ENCODE measurements at regions of chr17 and their contacts with region 1.

Region 1: GRCh38 chr17:75679706-75680442 is 12.7 kb downstream of the SAP30BP start:
- DNase-seq: no peak
- ATAC-seq: peak; percentile 93
- H3K4me3 ChIP-seq: no peak overlapping the region
- H3K27ac ChIP-seq: peak overlapping the region; percentile 59
- H3K4me1 ChIP-seq: peaks cover 27% of the 10 kb centered on the region
- H3K27me3 ChIP-seq: no peaks in the 10 kb centered on the region
- CTCF ChIP-seq: peak; percentile 42

Region 2: GRCh38 chr17:75720725-75721462 is 41.0 kb after region 1 on chr17 and contains the start of gene ITGB4:
- intact Hi-C with region 1: loop called (anchors 10 kb)
- DNase-seq: peak; percentile 91
- ATAC-seq: peak; percentile 90
- H3K4me3 ChIP-seq: peak within 1 kb of the TSS; percentile 57
- H3K27ac ChIP-seq: peak within 1 kb of the TSS; percentile 85
- H3K4me1 ChIP-seq: peaks cover 2% of the 10 kb centered on the region
- H3K27me3 ChIP-seq: peaks cover 6% of the 10 kb centered on the region
- CTCF ChIP-seq: peak; percentile 13
- total RNA-seq, gene ITGB4: 82.2 TPM

Region 3: GRCh38 chr17:75749545-75750389 is 69.9 kb after region 1 on chr17:
- intact Hi-C with region 1: loop called (anchors 5 kb)
- DNase-seq: peak; percentile 93
- ATAC-seq: peak; percentile 79
- H3K4me3 ChIP-seq: no peak overlapping the region
- H3K27ac ChIP-seq: no peak overlapping the region
- H3K4me1 ChIP-seq: peaks cover 23% of the 10 kb centered on the region
- H3K27me3 ChIP-seq: no peaks in the 10 kb centered on the region
- CTCF ChIP-seq: peak; percentile 96

Region 4: GRCh38 chr17:75830164-75830929 is 150.5 kb after region 1 on chr17:
- intact Hi-C with region 1: no loop called
- DNase-seq: no peak
- ATAC-seq: no peak
- H3K4me3 ChIP-seq: no peak overlapping the region
- H3K27ac ChIP-seq: no peak overlapping the region
- H3K4me1 ChIP-seq: peaks cover 16% of the 10 kb centered on the region
- H3K27me3 ChIP-seq: no peaks in the 10 kb centered on the region
- CTCF ChIP-seq: peak; percentile 43